HAP-1 (cell line): ENCODE measurements at regions of chr19 and their contacts with region 1.

Region 1: DNA sequence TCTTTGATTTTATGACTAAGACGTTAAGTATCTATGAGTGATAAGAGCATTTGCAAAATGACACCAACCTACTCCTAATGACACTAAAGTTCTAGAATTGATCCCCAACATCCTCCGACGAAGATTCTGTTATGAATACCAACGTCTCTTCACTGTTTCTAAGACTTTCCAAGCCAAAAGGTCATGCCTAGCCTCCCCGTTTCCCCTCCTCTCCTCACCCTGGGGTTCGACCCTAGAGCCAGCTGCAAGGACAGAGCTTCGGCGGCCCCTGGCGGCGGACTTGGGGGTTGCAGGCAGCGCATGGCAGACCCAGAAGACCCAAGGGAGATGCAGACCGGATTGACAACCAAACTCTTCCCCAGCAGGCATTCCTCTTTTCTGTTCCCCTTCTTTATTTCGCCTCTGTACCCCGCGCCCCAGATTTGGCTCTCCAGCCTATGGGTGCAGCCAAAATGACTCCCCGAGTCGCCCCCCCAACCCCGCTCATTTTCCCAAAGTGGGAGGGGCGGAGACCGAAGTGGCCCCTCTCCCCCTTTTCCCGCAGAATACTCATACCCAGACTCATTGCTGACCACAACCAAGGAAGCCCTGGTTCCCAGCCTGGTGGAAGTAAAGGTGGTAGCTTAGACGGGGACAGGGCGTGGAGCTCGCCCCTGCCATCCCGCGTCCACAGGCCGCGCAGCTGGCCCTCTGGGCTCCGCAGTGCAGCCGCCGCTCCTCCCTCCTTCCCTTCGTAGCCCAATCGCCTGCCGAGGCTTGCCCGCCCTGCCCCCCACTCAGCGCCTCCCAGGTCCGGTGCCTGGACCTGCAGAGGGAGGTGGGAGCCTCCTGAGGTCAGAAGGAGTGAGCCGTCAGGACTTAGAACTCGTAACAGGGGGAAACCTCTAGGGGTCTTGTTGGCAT is 4.1 kb upstream of the EML2 start:
- DNase-seq: peak; percentile 76 to 96
- H3K4me3 ChIP-seq: peak overlapping the region; percentile 7; the same call in 1 of the 2 replicates
- H3K4me1 ChIP-seq: peaks cover 33% of the 10 kb centered on the region
- H3K27me3 ChIP-seq: no peaks in the 10 kb centered on the region

Region 2: DNA sequence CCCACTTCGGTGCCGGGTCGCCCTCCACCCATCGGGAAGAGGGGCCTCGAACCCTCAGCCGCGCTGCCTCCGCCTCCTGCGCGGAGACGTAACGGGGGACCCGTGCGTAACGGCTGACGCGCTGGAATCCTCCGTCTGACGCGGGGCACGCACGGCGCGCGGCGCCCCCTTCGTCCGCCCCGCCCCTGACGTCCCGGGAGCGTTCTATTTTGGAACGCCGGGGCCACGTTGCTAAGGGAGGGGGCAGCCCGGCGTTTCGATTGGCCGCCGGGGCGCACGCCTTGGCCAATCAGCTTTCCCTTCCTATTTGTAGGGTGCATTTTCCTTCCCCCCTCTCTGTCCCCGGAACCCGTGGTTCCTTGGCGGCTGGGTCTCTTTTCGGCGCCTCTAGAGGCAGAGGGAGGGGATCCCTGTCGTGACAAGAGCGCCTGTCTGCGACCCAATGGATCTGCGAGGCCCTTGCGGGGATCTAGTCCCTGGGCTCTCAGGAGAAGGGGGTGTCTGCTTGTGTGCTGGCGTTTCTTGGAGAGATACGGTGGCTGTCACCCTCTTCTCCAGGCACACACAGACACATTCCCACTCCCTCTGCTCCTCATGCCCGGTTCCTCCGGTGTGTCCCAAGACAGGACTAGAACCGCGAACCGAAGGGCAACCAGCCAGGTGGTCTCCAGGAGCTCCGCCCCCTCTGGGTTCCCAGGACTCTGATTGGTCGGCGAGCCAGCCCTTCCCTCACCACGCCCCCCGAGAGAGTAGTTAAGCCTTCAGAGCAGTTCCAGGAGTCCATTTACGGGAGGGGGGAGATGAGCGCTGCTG is 173.9 kb before region 1 on chr19:
- in situ Hi-C with region 1: no loop called
- DNase-seq: peak; percentile 93 to 97
- H3K4me3 ChIP-seq: peak overlapping the region; percentile 77
- H3K4me1 ChIP-seq: peaks cover 12% of the 10 kb centered on the region; the same call in 1 of the 2 replicates
- H3K27me3 ChIP-seq: no peaks in the 10 kb centered on the region

Region 3: DNA sequence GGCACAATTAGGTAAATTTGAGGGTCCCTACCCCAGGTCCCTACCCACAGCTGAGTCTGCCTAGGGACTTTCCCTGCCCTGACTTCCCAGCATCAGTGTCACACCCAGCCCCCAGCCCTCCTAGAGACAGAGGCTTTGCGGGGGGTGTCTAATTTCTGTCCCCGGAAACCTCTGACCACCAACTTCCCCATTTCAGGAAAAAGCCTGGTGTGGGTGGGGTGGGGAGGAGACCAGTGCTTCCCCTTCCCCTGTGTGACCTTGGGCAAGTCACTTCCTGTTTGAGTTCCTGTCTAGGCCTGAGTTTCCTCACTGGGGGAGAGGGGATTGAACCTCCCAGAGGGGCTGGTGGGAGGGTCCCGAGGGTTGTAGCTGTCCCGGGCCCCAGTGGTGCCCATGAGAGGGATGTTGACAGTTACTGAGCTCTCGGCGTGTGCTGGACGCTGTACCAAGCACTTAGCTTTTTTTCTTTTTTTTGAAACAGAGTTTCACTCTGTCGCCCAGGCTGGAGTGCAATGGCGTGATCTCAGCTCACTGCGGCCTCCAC is 128.1 kb before region 1 on chr19:
- in situ Hi-C with region 1: loop called (anchors 10 kb)
- DNase-seq: no peak
- H3K4me3 ChIP-seq: no peak overlapping the region
- H3K4me1 ChIP-seq: no peaks in the 10 kb centered on the region
- H3K27me3 ChIP-seq: no peaks in the 10 kb centered on the region